K562 (cell line): ENCODE measurements at regions of chr3 and their contacts with region 1.

Region 1: DNA sequence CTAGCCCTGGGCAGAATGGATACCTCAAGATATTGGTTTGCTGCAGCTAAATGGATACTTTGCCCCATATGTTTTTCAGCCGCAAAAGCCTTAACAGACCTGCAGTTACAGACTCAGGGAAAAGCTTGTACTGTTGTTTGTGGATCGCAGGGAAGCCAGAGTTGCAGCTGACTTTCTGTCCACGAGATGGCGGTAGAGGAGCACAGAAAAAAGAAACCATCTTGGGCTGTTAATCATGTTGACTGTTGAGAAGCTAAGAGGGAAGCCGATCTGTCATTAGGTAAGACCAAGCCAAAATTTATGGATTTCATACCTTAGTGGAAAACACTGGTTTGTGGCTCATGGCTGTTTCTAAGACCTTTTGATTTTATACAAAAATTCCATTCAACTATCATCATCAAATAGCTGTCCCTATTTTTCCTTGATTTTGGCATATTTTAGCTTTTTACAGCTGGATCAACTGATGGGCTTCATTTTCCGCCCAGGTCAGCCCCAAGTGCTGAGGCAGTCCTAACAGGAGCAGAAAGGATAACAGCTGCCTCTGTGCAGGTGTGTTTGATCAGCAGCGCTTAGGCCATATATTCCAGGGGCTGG is 205.7 kb upstream of the ZPLD1 start:
- DNase-seq: peak; percentile 21 to 68 (median 40)
- ATAC-seq: peak; percentile 85
- H3K4me3 ChIP-seq: no peak overlapping the region
- H3K27ac ChIP-seq: no peak overlapping the region
- H3K4me1 ChIP-seq: no peaks in the 10 kb centered on the region; a peak in 1 of 5 replicates
- H3K27me3 ChIP-seq: no peaks in the 10 kb centered on the region
- CTCF ChIP-seq: peak; percentile 64 to 82 (median 77)
- EP300 ChIP-seq: no peak
- POLR2A ChIP-seq: no peak
- RAD21 ChIP-seq: peak; percentile 88

Region 2: DNA sequence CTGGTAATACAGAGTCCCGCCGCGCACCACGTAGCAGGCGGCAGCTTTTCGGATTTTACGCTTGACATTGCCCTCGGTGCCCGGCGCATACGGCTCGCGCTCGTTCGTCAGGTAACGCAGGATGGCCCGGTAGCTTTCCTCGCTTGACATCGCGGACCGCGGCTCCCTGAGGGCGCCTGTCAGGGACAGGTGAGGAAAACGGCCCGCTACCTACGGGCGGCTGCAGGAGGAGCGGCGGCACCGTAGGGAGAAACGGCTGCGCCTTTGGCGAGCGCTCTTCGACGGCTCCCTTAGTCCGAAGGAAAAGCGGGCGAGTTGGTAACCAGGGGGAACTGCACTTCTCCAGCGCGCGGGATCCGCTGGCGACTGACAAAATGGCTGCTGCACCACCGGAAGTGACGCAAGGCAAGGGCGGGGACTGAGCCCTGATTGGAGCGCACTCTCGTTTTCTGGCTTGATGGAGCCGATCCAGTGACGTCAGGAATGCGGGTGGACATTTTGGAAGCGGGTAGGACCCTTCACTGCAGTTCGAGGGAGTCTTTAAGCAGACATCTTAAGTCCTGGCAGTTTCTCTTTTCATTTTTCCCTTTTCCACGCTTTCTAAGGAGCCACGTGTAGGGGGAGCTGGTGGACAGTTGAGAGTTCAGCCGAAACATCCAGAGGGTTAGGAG is 552.3 kb before region 1 on chr3 and contains the start of gene ZBTB11:
- CTCF ChIA-PET with region 1: no interaction called
- POLR2A ChIA-PET with region 1: no interaction called
- in situ Hi-C with region 1: no loop called
- intact Hi-C with region 1: no loop called
- DNase-seq: peak; percentile 81 to 99 (median 87)
- ATAC-seq: peak; percentile 80
- H3K4me3 ChIP-seq: peak within 1 kb of the TSS; percentile 79
- H3K27ac ChIP-seq: peak within 1 kb of the TSS; percentile 86
- H3K4me1 ChIP-seq: peaks cover 6 to 14% of the 10 kb centered on the region in 2 experiments; a peak in 4 of 5 replicates
- H3K27me3 ChIP-seq: no peaks in the 10 kb centered on the region
- CTCF ChIP-seq: peak; percentile 55 to 77 (median 67)
- EP300 ChIP-seq: peak; percentile 20
- POLR2A ChIP-seq: peak; percentile 68
- RAD21 ChIP-seq: peak in 1 of 2 experiments; percentile 28; a peak in 1 of 4 replicates
- polyA plus RNA-seq, gene ZBTB11: 6.2 to 7.2 TPM

Region 3: GRCh38 chr3:101695779-101696372 is 533.3 kb before region 1 on chr3:
- CTCF ChIA-PET with region 1: interaction called, 10 read pairs
- POLR2A ChIA-PET with region 1: no interaction called
- in situ Hi-C with region 1: no loop called
- intact Hi-C with region 1: no loop called
- DNase-seq: peak in 3 of 4 experiments; percentile 8 to 68 (median 13)
- ATAC-seq: no peak
- H3K4me3 ChIP-seq: no peak overlapping the region
- H3K27ac ChIP-seq: no peak overlapping the region
- H3K4me1 ChIP-seq: peaks cover 2 to 4% of the 10 kb centered on the region in 2 experiments; a peak in 3 of 5 replicates
- H3K27me3 ChIP-seq: no peaks in the 10 kb centered on the region
- CTCF ChIP-seq: peak; percentile 61 to 70 (median 67)
- EP300 ChIP-seq: no peak
- POLR2A ChIP-seq: no peak
- RAD21 ChIP-seq: peak; percentile 48 to 54

Region 4: DNA sequence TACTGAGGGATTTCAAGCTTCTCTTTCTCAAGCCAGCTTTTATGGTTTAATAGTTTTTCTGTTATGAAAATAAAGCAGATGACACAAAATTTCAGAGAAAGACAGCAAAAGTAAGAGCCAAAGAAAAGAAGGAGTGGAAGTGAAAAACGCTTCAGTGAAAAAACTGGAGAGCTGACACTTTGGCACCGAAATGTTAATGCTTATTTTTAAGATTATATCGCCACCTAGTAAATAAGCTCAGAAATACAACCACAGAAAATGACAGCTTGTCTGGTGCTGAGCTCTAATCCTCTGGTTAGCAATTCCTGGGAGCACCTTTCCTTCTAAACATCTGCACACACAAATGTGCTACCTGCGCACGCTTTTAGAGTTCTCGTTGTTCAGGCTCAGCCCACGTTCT is 307.3 kb after region 1 on chr3:
- CTCF ChIA-PET with region 1: interaction called, 3 read pairs
- POLR2A ChIA-PET with region 1: no interaction called
- in situ Hi-C with region 1: no loop called
- intact Hi-C with region 1: loop called (anchors 2 kb)
- DNase-seq: peak in 1 of 4 experiments; percentile 2
- ATAC-seq: no peak
- H3K4me3 ChIP-seq: no peak overlapping the region
- H3K27ac ChIP-seq: no peak overlapping the region
- H3K4me1 ChIP-seq: no peaks in the 10 kb centered on the region
- H3K27me3 ChIP-seq: no peaks in the 10 kb centered on the region
- CTCF ChIP-seq: peak in 1 of 3 experiments; percentile 20; a peak in 2 of 6 replicates
- EP300 ChIP-seq: no peak
- POLR2A ChIP-seq: no peak
- RAD21 ChIP-seq: peak; percentile 62 to 63; a peak in 3 of 4 replicates